ENCODE measurements at regions of chr4 and their contacts with region 1.

Region 1: DNA sequence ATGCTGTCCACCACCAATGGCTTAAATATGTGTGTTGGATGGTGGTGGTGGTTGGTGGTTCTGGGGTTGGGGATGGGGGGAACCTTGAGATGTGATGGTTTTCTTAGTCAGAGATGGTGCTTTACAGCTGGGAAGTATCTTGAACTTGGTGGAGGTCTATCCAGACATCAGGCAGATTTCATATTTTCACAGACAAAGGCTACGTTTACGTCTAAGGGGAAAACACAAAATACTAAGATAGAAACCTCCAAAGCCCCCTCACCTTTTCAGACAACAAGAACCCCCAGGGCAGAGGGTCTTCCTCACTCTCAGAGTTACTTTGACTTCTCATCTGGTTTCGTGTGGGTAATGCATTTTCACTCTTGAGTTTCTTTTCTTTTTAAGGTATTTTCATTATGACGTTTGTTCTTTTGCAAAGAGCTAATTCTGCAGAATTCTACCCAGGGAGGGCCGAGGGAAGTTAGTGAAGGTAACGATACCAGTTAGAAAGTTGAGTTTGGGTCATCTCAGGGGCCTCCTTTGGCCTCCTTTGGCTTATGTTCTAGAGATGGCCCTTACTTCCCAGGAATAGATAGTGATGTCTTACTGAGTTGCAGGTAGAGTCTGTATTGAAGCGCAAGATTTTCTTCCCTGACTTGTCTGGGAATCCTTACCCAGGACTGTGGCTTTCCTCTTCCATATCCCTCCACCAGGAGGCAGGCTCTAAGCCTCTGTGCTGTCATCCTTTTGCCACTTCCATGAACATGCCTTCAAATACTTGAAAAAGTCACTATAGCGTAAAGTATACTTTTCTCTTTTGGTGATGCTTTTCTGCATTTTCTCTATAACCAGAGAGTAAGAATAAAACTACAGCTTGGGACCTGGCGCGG is 31.9 kb downstream of the RHOH start:
- DNase-seq: no peak
- ATAC-seq: peak; percentile 9
- H3K4me3 Mint-ChIP-seq: peak overlapping the region; percentile 25
- H3K27ac Mint-ChIP-seq: peak overlapping the region; percentile 78
- H3K4me1 Mint-ChIP-seq: peaks cover 91% of the 10 kb centered on the region
- H3K27me3 Mint-ChIP-seq: no peaks in the 10 kb centered on the region
- CTCF ChIP-seq: no peak

Region 2: DNA sequence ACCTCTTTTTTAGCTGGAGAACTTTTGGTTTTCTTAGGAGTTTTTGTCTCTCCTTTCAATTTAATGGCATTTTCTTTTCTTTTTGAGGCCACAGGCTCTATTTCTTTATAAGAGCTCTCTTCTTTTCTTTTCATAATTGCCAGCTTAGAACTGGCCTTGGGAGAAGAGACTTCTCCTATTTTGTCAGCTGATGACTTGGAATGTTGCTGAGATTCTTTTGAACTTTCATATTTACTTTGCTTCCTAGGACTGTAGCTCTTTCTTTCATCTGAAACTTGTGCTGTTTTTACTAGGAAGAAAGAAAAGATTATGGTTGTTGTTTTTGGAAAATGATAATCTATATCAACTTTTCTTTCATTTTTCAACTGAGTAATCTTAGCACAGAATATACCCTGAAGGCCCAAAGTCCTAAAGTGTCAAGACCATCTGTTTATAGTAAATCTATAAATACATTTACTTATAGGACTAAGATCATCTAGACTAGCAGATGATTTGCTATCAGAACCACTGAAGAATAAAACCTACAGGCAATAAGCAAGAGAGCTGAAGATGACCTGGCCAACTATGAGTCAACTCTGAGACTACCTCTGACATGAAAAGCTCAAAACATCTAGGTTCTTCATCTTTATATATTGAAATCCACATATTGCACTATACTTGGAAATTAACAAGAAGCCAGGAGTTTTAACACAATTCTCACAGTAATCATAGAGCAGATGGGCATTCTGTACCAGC is 908.2 kb before region 1 on chr4:
- CTCF ChIA-PET with region 1: no interaction called
- POLR2A ChIA-PET with region 1: interaction called, 10 read pairs
- intact Hi-C with region 1: no loop called
- DNase-seq: no peak
- ATAC-seq: no peak
- H3K4me3 Mint-ChIP-seq: no peak overlapping the region
- H3K27ac Mint-ChIP-seq: no peak overlapping the region
- H3K4me1 Mint-ChIP-seq: no peaks in the 10 kb centered on the region
- H3K27me3 Mint-ChIP-seq: no peaks in the 10 kb centered on the region
- CTCF ChIP-seq: no peak

Region 3: GRCh38 chr4:39814403-39815185 is 414.1 kb before region 1 on chr4:
- CTCF ChIA-PET with region 1: no interaction called
- POLR2A ChIA-PET with region 1: no interaction called
- intact Hi-C with region 1: no loop called
- DNase-seq: no peak
- ATAC-seq: peak; percentile 25
- H3K4me3 Mint-ChIP-seq: no peak overlapping the region
- H3K27ac Mint-ChIP-seq: no peak overlapping the region
- H3K4me1 Mint-ChIP-seq: no peaks in the 10 kb centered on the region
- H3K27me3 Mint-ChIP-seq: no peaks in the 10 kb centered on the region
- CTCF ChIP-seq: no peak

Region 4: DNA sequence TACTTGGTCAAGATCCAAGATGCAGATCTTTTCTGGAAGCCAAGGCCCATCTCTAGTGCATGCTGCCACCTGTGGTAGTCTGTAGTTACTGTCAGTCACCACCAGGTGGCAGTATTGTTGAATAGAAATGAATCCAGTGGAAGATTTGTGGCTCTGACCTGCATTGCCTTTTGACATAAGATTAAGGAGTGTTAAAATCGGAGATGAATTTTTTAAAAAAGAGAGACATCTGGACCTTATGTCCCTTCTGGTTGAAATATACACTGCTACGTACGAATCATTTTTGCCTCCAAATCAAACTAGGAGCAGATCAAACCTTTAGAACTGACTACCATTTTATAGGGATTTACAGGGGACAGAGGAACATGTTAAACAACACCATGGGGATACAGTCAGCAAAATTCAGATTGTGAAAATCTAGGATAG is 78.8 kb before region 1 on chr4:
- CTCF ChIA-PET with region 1: interaction called, 3 read pairs
- POLR2A ChIA-PET with region 1: interaction called, 5 read pairs
- intact Hi-C with region 1: loop called (anchors 2 kb)
- DNase-seq: no peak
- ATAC-seq: peak; percentile 97
- H3K4me3 Mint-ChIP-seq: no peak overlapping the region
- H3K27ac Mint-ChIP-seq: peak overlapping the region; percentile 59
- H3K4me1 Mint-ChIP-seq: peaks cover 38% of the 10 kb centered on the region
- H3K27me3 Mint-ChIP-seq: no peaks in the 10 kb centered on the region
- CTCF ChIP-seq: peak; percentile 57

Region 5: DNA sequence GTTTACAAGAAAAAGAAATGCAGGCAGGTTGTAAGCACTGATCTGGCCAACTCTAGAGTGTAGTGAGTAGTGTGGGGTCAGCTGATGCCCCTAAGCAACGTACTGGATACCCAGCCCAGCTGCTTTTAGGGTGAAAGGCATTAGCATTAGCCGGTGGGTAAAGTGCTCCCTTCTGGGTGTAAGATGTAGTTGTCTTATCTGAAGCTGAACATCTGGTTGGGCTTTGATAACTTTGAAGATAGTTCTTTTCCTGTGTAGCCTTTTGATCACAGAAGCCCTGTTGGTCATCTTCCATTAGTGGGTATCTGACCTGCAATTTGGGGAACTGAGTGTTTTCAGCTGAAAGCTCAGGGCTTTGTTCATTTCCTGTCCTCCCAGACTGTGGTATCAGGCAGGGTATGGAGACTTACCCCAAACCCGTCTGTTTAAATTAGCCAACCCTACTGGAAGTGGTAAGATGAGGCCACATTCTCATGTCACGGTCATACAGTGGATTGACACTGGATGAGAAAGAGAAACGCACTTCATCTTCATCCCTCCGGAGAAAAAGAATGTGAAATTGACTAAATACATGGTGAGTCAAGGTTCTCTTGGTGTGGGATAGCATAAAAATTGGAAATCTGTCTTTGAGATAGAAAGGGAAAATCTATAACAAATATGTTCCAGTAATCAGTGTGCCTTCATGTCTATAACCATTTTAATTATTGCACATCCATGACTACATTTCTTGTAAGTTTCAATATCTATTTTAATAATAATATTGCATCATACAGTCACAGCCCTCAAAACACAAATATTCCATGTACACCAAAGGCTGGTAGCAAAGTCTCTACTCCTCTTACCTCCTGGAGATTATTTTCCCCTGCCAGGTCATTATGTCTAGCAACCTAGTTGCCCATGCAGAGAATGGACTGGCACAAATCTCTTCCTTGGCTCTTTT is 23.2 kb before region 1 on chr4:
- CTCF ChIA-PET with region 1: interaction called, 3 read pairs
- POLR2A ChIA-PET with region 1: interaction called, 13 read pairs
- intact Hi-C with region 1: loop called (anchors 2 kb)
- DNase-seq: no peak
- ATAC-seq: peak; percentile 51
- H3K4me3 Mint-ChIP-seq: peak overlapping the region; percentile 71
- H3K27ac Mint-ChIP-seq: peak overlapping the region; percentile 92
- H3K4me1 Mint-ChIP-seq: peaks cover 92% of the 10 kb centered on the region
- H3K27me3 Mint-ChIP-seq: no peaks in the 10 kb centered on the region
- CTCF ChIP-seq: no peak

Region 6: DNA sequence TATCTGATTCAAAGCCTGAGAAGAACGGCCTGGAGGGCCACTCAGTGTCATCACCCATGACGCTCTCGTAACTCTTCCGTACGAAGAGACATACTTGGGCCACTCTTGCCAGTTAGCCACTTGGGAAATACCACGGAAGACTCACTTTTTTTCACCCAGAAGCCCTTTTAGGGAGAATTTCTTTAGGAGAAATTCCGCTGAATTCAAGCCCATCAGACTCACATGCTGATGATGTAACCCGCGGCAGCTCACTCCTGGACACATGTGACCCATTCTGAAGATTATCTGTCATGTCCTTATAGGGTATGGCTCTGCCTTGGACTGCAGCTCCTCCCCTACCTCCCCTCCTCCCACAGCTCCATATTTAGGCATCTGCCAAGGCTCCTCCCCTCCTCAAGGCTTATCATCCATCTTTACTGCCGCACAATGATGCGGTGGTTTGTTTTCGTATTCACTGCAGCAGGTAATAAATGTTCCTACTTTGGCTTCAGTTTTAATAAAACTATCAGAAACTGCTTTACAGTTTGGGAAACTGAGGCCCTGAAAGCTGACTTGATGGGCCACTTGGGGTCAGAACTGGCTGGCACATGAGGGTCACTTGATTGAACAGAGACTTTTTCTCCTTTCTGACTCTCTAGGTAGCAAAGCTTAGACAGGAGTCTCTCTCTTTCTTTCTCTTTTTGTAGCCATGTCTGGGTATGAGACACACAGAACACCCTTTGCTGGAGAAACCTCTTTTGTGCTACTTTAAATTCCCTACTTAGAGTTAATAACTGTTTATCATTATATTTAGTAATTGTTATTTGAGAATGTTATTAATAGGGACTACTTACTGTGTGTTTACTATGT is 10.2 kb after region 1 on chr4:
- CTCF ChIA-PET with region 1: no interaction called
- POLR2A ChIA-PET with region 1: interaction called, 9 read pairs
- intact Hi-C with region 1: loop called (anchors 2 kb)
- DNase-seq: no peak
- ATAC-seq: no peak
- H3K4me3 Mint-ChIP-seq: peak overlapping the region; percentile 16
- H3K27ac Mint-ChIP-seq: peak overlapping the region; percentile 77
- H3K4me1 Mint-ChIP-seq: peaks cover 91% of the 10 kb centered on the region
- H3K27me3 Mint-ChIP-seq: no peaks in the 10 kb centered on the region
- CTCF ChIP-seq: no peak